Lower lobe of right lung (tissue), 2 donors: ENCODE measurements at regions of chr1 and their contacts with region 1.

Region 1: DNA sequence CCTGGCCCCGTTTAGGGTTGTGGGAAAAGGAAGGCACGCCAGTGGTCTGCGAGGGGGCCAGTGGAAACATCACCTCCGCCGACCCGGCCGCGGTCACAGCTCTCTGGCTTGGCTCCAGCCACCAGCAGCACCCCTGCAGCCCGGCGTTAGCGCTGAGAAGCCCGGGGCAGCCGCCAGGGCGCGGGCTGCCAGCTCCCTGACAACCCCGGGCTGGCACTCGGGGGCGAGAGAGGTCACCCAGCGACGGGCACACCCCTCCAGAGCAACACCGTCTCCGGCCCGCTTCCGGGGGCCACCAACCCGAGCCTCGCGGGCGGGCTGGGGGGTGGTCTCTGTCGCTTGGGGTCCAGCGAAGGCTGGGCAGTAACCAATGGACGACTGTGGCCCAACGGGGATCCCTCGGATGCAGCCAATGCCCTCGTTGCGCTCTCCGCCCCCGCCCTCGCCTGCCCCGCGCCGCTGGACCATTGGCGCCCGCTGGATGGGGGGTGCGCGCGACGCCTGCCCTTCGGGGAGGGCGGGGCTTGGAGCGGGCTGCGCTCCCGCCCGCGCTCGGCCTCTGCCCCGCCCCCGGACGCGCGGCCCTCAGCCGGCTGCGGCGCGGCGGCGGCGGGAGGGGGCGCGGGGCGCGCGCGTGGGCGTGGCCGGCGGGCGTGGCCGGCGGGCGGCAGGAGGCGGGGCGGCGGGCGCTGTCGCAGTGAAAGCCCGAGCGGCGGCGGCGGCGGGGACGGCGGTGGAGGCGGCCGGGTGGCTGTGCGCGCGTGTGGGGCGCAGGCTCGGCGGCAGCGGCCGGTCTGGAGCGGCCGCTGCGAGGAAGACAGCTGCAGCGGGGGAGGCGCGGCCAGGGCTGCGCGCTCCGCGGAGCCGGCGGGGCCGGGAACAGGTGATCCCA is at the start of gene MAN1C1:
- DNase-seq: peak; percentile 91
- ATAC-seq: peak; percentile 96 to 97
- H3K4me3 ChIP-seq: peak within 1 kb of the TSS; percentile 70
- H3K27ac ChIP-seq: peak within 1 kb of the TSS; percentile 66
- H3K4me1 ChIP-seq: peaks cover 43% of the 10 kb centered on the region
- H3K27me3 ChIP-seq: no peaks in the 10 kb centered on the region
- CTCF ChIP-seq: peak; percentile 56
- total RNA-seq, gene MAN1C1: 20.4 TPM

Region 2: DNA sequence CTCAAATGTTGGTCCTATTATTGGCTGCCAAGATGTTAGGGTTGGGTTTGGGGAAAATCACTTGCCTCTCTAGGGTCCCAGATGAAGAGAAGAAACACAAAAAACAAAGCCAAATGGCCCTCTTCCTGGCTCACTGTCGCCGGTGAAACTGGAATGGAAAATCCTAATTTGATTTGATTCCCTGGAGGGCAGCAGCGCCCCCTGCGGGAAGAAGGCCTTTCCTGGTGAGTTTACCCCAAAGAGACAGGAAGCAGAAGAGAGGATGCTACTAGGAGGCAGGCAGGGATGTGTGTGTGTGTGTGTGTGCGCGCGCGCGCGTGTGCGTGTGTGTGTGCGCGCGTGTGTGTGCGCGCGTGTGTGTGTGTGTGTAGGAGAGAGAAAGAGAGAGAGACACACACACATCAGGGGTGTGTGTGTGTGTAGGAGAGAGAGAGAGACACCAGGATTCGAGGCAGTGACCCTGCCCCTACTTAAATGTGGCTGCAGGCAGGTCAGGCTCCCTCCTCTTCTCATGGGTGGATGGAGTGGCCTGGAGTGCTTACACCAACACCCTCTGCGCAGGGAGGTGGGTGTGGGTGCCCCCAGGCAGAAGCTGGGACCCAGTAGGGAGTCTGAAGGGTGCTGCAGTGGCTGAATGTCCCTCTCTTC is 180.6 kb after region 1 on chr1:
- intact Hi-C with region 1: loop called (anchors 10 kb)
- DNase-seq: peak; percentile 89
- ATAC-seq: peak; percentile 65 to 70
- H3K4me3 ChIP-seq: peak overlapping the region; percentile 1
- H3K27ac ChIP-seq: peak overlapping the region; percentile 66
- H3K4me1 ChIP-seq: peaks cover 48% of the 10 kb centered on the region
- H3K27me3 ChIP-seq: no peaks in the 10 kb centered on the region
- CTCF ChIP-seq: peak; percentile 75